PC-9 (cell line): ENCODE measurements at regions of chr11 and their contacts with region 1.

Region 1: GRCh38 chr11:65569973-65570918 is at the start of gene ZNRD2:
- DNase-seq: peak; percentile 98 to 99
- H3K4me3 ChIP-seq: peak within 1 kb of the TSS; percentile 73
- H3K27ac ChIP-seq: peak within 1 kb of the TSS; percentile 68
- H3K4me1 ChIP-seq: peaks cover 54% of the 10 kb centered on the region
- H3K27me3 ChIP-seq: no peaks in the 10 kb centered on the region
- CTCF ChIP-seq: peak; percentile 57
- total RNA-seq, gene ZNRD2: 51.4 and 53.5 TPM in 2 replicates

Region 2: DNA sequence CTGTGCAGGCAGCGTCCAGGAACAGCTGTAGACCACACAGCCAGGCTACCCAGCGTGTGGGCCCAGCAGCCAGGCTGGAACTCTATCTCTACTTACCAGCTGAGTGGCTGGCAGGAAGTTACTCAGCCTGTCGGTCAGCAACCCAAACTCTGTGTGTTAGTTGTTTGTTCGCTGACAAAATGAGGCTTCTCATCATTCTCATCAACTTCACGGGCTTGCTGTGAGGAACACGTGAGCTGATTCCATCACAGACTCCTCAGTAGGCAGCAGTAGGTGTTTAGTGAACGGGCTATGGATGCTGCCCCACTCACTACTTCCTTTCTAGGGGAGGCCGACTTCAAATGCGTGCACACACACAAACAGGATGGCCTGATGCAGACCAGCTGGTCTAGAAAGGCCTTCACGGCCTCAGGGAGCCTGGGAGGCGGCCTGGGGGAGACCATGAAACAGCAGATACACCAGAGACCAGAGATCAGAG is 401.0 kb before region 1 on chr11:
- CTCF ChIA-PET with region 1: no interaction called
- POLR2A ChIA-PET with region 1: interaction called, 12 read pairs
- intact Hi-C with region 1: no loop called
- DNase-seq: no peak
- H3K4me3 ChIP-seq: no peak overlapping the region
- H3K27ac ChIP-seq: no peak overlapping the region
- H3K4me1 ChIP-seq: no peaks in the 10 kb centered on the region; the same call in 1 of the 2 replicates
- H3K27me3 ChIP-seq: no peaks in the 10 kb centered on the region
- CTCF ChIP-seq: no peak

Region 3: GRCh38 chr11:65482306-65482850 is 87.9 kb before region 1 on chr11:
- CTCF ChIA-PET with region 1: no interaction called
- POLR2A ChIA-PET with region 1: interaction called, 47 read pairs
- intact Hi-C with region 1: no loop called
- DNase-seq: no peak
- H3K4me3 ChIP-seq: no peak overlapping the region
- H3K27ac ChIP-seq: 0 out of 2 replicates have a peak overlapping the region, but pooled peaks have one; percentile 27
- H3K4me1 ChIP-seq: peaks cover 58% of the 10 kb centered on the region
- H3K27me3 ChIP-seq: no peaks in the 10 kb centered on the region
- CTCF ChIP-seq: no peak

Region 4: DNA sequence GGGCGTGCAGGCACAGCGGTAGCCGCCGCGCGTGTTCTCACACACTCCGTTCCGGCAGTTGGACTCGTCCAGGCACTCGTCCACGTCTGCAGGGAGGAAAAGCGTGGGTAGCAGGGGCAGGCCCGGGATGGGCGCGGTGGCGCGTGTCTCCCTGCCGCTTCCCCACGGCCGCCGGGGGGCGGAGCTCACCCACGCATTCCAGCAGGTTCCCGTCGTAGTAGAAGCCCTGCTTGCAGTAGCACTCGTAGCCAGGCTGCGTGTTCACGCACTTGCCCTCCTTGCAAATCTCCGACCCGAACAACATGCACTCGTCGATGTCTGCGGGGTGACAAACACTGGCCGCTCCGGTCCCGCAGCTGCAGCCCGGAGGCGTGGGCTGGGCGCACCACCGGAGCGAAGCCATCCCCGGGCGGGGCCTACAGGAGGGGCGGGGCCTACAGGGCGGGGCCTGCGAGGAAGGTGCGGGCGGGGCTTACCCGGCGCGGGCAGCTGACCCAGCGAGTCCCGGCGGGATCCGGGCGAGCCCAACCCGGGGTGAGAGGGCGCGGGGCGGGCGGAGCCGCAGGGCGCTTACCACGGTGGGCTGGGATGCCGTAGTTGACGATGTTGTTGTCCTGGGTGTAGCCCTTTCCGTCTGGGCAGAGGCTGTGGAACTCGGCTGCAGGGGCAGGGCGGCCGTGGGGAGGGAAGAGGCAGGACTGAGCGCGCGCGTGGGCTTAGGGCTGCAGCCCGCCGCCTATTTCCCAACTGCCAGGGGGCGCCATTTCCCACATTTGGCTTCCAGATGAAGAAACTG is 29.8 kb before region 1 on chr11:
- CTCF ChIA-PET with region 1: interaction called, 25 read pairs
- POLR2A ChIA-PET with region 1: interaction called, 5 read pairs
- intact Hi-C with region 1: loop called (anchors 1 kb)
- DNase-seq: peak; percentile 66 to 90
- H3K4me3 ChIP-seq: peak overlapping the region; percentile 46; the same call in 1 of the 2 replicates
- H3K27ac ChIP-seq: no peak overlapping the region
- H3K4me1 ChIP-seq: peaks cover 17% of the 10 kb centered on the region
- H3K27me3 ChIP-seq: no peaks in the 10 kb centered on the region
- CTCF ChIP-seq: peak; percentile 95

Region 5: GRCh38 chr11:65615229-65615941 is 45.1 kb after region 1 on chr11 and contains the start of gene PCNX3:
- CTCF ChIA-PET with region 1: interaction called, 4 read pairs
- POLR2A ChIA-PET with region 1: no interaction called
- intact Hi-C with region 1: loop called (anchors 1 kb)
- DNase-seq: peak; percentile 100
- H3K4me3 ChIP-seq: peak within 1 kb of the TSS; percentile 93
- H3K27ac ChIP-seq: peak within 1 kb of the TSS; percentile 64
- H3K4me1 ChIP-seq: peaks cover 27% of the 10 kb centered on the region; the same call in 1 of the 2 replicates
- H3K27me3 ChIP-seq: no peaks in the 10 kb centered on the region
- CTCF ChIP-seq: no peak
- total RNA-seq, gene PCNX3: 76.9 and 85.9 TPM in 2 replicates

Region 6: GRCh38 chr11:65988791-65989592 is 418.7 kb after region 1 on chr11:
- CTCF ChIA-PET with region 1: interaction called, 30 read pairs
- POLR2A ChIA-PET with region 1: no interaction called
- intact Hi-C with region 1: no loop called
- DNase-seq: peak; percentile 87 to 92
- H3K4me3 ChIP-seq: no peak overlapping the region
- H3K27ac ChIP-seq: no peak overlapping the region
- H3K4me1 ChIP-seq: peaks cover 4% of the 10 kb centered on the region; the same call in 1 of the 2 replicates
- H3K27me3 ChIP-seq: no peaks in the 10 kb centered on the region
- CTCF ChIP-seq: peak; percentile 99